Activated T-helper 2 cell treated with anti-CD3 and anti-CD28 coated beads, Interferon-gamma antibody, Interleukin-2, Interleukin-4, amounts not matched to agents 10 μg/mL and 5 μg/mL and 100 μg/mL, durations not matched to agents 14 hours and 24 hours and 36 hours (primary cell): ENCODE measurements at regions of chr9 and their contacts with region 1.

Region 1: GRCh38 chr9:23821375-23822181 is 4.5 kb downstream of the ELAVL2 start:
- DNase-seq: no peak
- H3K4me3 Mint-ChIP-seq: no peak overlapping the region
- H3K27ac Mint-ChIP-seq: no peak overlapping the region
- H3K4me1 Mint-ChIP-seq: no peaks in the 10 kb centered on the region
- H3K27me3 Mint-ChIP-seq: peaks cover 14% of the 10 kb centered on the region

Region 2: DNA sequence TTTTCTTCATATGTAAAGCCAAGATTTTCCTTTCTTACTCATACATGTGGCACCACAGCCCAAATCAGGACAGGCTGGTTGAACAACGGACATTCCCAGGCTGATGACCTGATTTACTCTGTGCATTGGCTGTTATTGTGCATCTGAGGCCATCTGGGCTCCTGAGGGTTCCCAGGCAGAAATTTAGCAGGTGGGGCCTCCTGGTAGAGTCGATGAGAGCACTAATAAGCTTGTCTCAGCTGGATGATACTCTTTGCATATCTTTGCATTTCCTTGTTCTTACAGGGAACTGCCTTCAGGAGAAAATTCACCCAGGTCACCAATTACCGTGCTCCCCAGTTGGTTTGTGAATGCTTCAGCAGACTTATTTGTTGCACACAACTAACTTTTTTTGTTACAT is 600.6 kb before region 1 on chr9:
- intact Hi-C with region 1: no loop called
- DNase-seq: no peak
- H3K4me3 Mint-ChIP-seq: no peak overlapping the region
- H3K27ac Mint-ChIP-seq: no peak overlapping the region
- H3K4me1 Mint-ChIP-seq: no peaks in the 10 kb centered on the region
- H3K27me3 Mint-ChIP-seq: no peaks in the 10 kb centered on the region

Region 3: GRCh38 chr9:23747088-23748075 is 74.2 kb before region 1 on chr9:
- intact Hi-C with region 1: no loop called
- DNase-seq: no peak
- H3K4me3 Mint-ChIP-seq: no peak overlapping the region
- H3K27ac Mint-ChIP-seq: no peak overlapping the region
- H3K4me1 Mint-ChIP-seq: no peaks in the 10 kb centered on the region
- H3K27me3 Mint-ChIP-seq: no peaks in the 10 kb centered on the region

Region 4: GRCh38 chr9:23850690-23851629 is 29.4 kb after region 1 on chr9:
- intact Hi-C with region 1: loop called (anchors 2 kb)
- DNase-seq: no peak
- H3K4me3 Mint-ChIP-seq: no peak overlapping the region
- H3K27ac Mint-ChIP-seq: no peak overlapping the region
- H3K4me1 Mint-ChIP-seq: no peaks in the 10 kb centered on the region
- H3K27me3 Mint-ChIP-seq: peaks cover 7% of the 10 kb centered on the region

Region 5: DNA sequence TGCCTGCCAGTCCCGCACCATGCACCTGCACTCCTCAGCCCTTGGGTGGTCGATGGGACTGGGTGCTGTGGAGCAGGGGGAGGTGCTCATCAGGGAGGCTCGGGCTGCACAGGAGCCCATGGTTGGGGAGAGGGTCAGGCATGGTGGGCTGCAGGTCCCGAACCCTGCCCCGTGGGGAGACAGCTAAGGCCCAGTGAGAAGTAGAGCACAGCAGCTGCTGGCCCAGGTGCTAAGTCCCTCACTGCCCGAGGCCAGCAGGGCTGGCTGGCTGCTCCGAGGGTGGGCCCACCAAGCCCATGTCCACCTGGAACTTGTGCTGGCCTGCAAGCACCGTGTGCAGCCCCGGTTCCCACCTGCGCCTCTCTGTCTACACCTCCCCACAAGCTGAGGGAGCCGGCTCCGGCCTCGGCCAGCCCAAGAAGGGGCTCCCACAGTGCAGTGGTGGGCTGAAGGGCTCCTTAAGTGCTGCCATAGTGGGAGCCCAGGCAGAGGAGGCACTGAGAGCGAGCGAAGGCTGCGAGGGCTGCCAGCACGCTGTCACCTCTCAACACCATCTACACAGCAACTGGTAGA is 92.9 kb after region 1 on chr9:
- intact Hi-C with region 1: no loop called
- DNase-seq: no peak
- H3K4me3 Mint-ChIP-seq: no peak overlapping the region
- H3K27ac Mint-ChIP-seq: no peak overlapping the region
- H3K4me1 Mint-ChIP-seq: no peaks in the 10 kb centered on the region
- H3K27me3 Mint-ChIP-seq: no peaks in the 10 kb centered on the region

Region 6: DNA sequence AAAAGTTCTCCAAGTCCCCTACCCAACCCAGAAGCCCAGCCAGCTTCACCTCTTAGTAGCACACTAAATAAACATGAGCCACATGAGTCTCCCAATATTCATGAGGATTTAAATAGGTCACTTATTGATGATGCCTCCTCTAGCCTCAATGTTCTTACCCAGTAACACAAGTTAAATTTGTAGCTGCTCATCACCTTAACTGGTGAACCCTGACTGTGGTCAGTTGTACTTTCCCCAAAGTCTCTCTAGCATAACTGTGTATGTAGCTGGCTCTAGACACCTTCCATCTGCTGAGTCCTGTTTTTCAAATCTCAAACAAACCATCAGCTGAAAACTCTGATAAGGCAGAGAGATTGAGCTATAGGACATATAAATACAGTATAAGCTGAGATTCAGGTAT is 104.8 kb after region 1 on chr9:
- intact Hi-C with region 1: no loop called
- DNase-seq: no peak
- H3K4me3 Mint-ChIP-seq: no peak overlapping the region
- H3K27ac Mint-ChIP-seq: no peak overlapping the region
- H3K4me1 Mint-ChIP-seq: no peaks in the 10 kb centered on the region
- H3K27me3 Mint-ChIP-seq: no peaks in the 10 kb centered on the region